ENCODE measurements at regions of chr12 and their contacts with region 1.

Region 1: GRCh38 chr12:126784328-126784921 is 1482.5 kb upstream of the TMEM132C start:
- DNase-seq: peak; percentile 83
- H3K4me3 ChIP-seq: no peak overlapping the region
- H3K27ac ChIP-seq: no peak overlapping the region
- H3K4me1 ChIP-seq: peaks cover 31% of the 10 kb centered on the region
- H3K27me3 ChIP-seq: no peaks in the 10 kb centered on the region
- CTCF ChIP-seq: peak; percentile 81

Region 2: DNA sequence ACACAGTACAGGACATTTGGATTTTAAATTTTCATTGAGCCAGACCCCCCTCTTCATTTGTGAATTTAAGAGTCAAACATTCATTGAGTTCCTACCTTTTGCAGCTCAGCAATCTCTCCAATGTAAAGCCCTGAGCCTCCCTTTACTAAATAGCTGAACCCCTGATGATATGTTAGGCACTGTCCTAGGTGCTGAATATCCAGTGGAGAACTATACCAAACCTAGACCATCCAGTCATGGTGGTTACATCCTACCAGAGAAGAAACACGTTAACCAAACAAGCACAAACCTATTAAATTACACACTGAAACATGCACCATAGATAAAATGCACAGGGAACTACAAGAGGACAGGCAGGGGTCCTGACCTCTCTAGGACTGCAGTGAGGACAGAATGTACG is 102.7 kb before region 1 on chr12:
- CTCF ChIA-PET with region 1: no interaction called
- POLR2A ChIA-PET with region 1: no interaction called
- intact Hi-C with region 1: no loop called
- DNase-seq: peak; percentile 46
- H3K4me3 ChIP-seq: no peak overlapping the region
- H3K27ac ChIP-seq: no peak overlapping the region
- H3K4me1 ChIP-seq: no peaks in the 10 kb centered on the region
- H3K27me3 ChIP-seq: no peaks in the 10 kb centered on the region
- CTCF ChIP-seq: no peak

Region 3: DNA sequence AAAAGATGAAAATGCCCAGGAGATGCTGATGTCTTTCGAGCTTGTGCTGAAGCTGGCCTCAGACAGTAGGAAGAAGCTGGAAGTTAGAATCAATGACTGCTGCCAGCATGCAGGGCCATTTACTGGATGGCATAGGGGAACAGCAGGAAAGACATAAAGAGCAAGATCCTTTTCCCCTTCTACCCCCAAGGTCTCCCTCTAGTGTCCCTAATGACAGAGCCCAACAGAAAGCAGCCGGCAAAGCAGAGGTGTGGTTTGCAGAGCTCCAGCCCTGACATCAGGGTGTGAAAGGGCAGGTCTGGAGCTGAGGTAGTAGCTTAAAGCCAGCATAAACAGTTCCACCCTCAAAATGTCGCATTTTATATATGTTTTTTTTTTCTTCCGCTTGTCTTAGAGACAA is 78.1 kb before region 1 on chr12:
- CTCF ChIA-PET with region 1: no interaction called
- POLR2A ChIA-PET with region 1: no interaction called
- intact Hi-C with region 1: loop called (anchors 2 kb)
- DNase-seq: no peak
- H3K4me3 ChIP-seq: no peak overlapping the region
- H3K27ac ChIP-seq: no peak overlapping the region
- H3K4me1 ChIP-seq: peaks cover 26% of the 10 kb centered on the region
- H3K27me3 ChIP-seq: no peaks in the 10 kb centered on the region
- CTCF ChIP-seq: no peak

Region 4: DNA sequence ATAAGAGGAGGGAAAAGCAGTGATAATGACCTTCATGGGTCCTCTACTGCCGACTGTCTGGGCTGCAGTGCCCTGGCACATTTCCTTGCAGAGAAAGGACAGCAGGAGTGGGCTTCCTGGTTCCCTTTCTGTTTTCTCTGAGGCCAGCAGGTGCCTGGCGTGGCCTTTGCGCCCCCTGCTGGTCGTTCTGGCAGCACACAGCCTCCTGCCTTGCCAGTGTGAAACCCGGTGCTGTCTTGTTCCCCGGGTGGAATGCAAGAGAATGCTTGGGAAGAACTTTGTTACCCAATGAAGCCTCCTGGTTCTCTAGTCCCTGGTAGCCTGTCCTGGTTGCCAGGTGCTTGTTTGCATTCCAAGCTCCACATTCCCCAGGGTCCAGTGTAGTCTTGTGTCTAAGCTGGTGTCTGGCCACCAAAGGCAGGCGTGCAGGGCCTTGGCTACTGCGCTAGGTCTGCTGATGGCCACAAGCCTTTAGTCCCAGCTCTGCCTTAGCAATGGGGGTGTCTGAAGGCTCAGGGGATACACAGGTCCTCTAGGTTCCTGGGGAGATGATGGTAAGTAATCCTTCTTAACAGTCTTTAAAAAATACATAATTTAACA is 90.1 kb after region 1 on chr12:
- CTCF ChIA-PET with region 1: interaction called, 7 read pairs
- POLR2A ChIA-PET with region 1: no interaction called
- intact Hi-C with region 1: loop called (anchors 2 kb)
- DNase-seq: peak; percentile 87
- H3K4me3 ChIP-seq: no peak overlapping the region
- H3K27ac ChIP-seq: no peak overlapping the region
- H3K4me1 ChIP-seq: peaks cover 6% of the 10 kb centered on the region
- H3K27me3 ChIP-seq: no peaks in the 10 kb centered on the region
- CTCF ChIP-seq: peak; percentile 99

Region 5: GRCh38 chr12:126966498-126966897 is 182.1 kb after region 1 on chr12:
- CTCF ChIA-PET with region 1: no interaction called
- POLR2A ChIA-PET with region 1: interaction called, 26 read pairs
- intact Hi-C with region 1: no loop called
- DNase-seq: peak; percentile 81
- H3K4me3 ChIP-seq: no peak overlapping the region
- H3K27ac ChIP-seq: no peak overlapping the region
- H3K4me1 ChIP-seq: peaks cover 16% of the 10 kb centered on the region
- H3K27me3 ChIP-seq: no peaks in the 10 kb centered on the region
- CTCF ChIP-seq: no peak

Measured in A673 (cell line).